ENCODE measurements at regions of chr7 and their contacts with region 1.

Region 1: GRCh38 chr7:47991741-47992311 is 12.4 kb upstream of the HUS1 start:
- DNase-seq: peak; percentile 87 to 92 (median 90)
- H3K4me3 ChIP-seq: peak overlapping the region; percentile 61 to 81 (median 71)
- H3K27ac ChIP-seq: peak overlapping the region in 1 of 2 experiments; percentile 73
- H3K4me1 ChIP-seq: peaks cover 8 to 20% (median 13%) of the 10 kb centered on the region in 4 experiments
- H3K27me3 ChIP-seq: no peaks in the 10 kb centered on the region

Region 2: GRCh38 chr7:47852330-47853245 is 139.2 kb before region 1 on chr7:
- CTCF ChIA-PET with region 1: no interaction called
- POLR2A ChIA-PET with region 1: no interaction called
- DNase-seq: no peak
- H3K4me3 ChIP-seq: no peak overlapping the region
- H3K27ac ChIP-seq: no peak overlapping the region
- H3K4me1 ChIP-seq: no peaks in the 10 kb centered on the region
- H3K27me3 ChIP-seq: no peaks in the 10 kb centered on the region

Region 3: GRCh38 chr7:47945261-47946001 is 46.4 kb before region 1 on chr7:
- CTCF ChIA-PET with region 1: interaction called, 13 read pairs
- POLR2A ChIA-PET with region 1: no interaction called
- DNase-seq: peak; percentile 51 to 78 (median 67)
- H3K4me3 ChIP-seq: no peak overlapping the region
- H3K27ac ChIP-seq: no peak overlapping the region
- H3K4me1 ChIP-seq: no peaks in the 10 kb centered on the region
- H3K27me3 ChIP-seq: no peaks in the 10 kb centered on the region

Region 4: GRCh38 chr7:48084727-48085432 is 93.1 kb after region 1 on chr7:
- CTCF ChIA-PET with region 1: interaction called, 17 read pairs
- POLR2A ChIA-PET with region 1: no interaction called
- DNase-seq: peak; percentile 88 to 97 (median 97)
- H3K4me3 ChIP-seq: no peak overlapping the region
- H3K27ac ChIP-seq: no peak overlapping the region
- H3K4me1 ChIP-seq: peaks cover 2 to 39% (median 28%) of the 10 kb centered on the region in 4 experiments
- H3K27me3 ChIP-seq: peaks cover 0 to 2% (median 0%) of the 10 kb centered on the region in 5 experiments

Region 5: DNA sequence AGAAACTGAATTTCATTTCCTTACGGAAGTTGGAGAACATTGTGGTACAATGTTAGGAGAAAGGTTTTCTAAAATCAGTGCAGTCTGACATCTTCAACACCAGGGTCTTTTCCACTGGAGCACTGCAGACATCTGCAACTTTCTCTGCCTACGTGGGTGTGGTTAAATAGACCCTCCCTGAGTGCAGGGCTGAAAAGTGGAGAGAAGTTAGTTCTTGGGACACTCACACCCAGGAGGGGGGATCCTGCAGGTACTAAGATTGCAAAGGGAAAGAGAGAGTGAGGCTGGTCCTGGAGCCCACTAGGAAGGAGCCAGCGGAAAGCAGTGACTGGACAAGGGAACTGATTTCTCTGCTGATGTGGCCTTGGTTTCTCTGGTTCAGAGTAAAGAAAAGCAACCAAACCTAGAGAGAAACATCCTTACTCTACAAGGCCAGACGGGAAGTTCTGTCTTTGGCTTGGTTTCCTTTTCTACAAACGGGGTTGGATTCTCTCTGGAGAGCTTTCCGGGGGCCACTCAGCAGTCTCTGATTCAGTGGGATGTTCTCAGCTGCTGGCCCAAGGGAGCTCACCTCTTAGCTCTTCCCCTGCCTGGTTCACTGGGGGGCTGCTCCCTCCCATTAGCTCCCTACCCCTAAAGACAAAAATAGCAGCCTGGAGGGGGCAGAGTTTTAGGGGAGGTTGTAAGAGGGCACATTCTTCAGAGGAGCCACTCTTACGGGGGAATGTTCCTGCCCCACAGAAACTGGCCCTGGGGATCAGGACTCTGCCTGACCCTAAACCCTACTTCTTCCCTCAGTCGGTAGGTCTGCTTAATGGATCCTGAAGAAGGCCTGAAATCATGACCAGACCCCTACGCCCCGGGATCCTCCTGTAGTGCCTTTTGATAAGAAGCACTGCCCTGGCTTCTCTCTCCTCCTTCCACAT is 99.9 kb after region 1 on chr7:
- CTCF ChIA-PET with region 1: interaction called, 17 read pairs
- POLR2A ChIA-PET with region 1: no interaction called
- DNase-seq: no peak
- H3K4me3 ChIP-seq: no peak overlapping the region
- H3K27ac ChIP-seq: no peak overlapping the region
- H3K4me1 ChIP-seq: peaks cover 5 to 31% (median 28%) of the 10 kb centered on the region in 4 experiments
- H3K27me3 ChIP-seq: peaks cover 0 to 4% (median 3%) of the 10 kb centered on the region in 5 experiments

Region 6: GRCh38 chr7:48109848-48110663 is 118.2 kb after region 1 on chr7:
- CTCF ChIA-PET with region 1: interaction called, 91 read pairs
- POLR2A ChIA-PET with region 1: interaction called, 4 read pairs
- DNase-seq: peak; percentile 54 to 70 (median 58)
- H3K4me3 ChIP-seq: no peak overlapping the region
- H3K27ac ChIP-seq: no peak overlapping the region
- H3K4me1 ChIP-seq: no peaks in the 10 kb centered on the region
- H3K27me3 ChIP-seq: no peaks in the 10 kb centered on the region

Measured in common myeloid progenitor, CD34-positive (primary cell).